PC-3 (cell line): ENCODE measurements at regions of chr12 and their contacts with region 1.

Region 1: DNA sequence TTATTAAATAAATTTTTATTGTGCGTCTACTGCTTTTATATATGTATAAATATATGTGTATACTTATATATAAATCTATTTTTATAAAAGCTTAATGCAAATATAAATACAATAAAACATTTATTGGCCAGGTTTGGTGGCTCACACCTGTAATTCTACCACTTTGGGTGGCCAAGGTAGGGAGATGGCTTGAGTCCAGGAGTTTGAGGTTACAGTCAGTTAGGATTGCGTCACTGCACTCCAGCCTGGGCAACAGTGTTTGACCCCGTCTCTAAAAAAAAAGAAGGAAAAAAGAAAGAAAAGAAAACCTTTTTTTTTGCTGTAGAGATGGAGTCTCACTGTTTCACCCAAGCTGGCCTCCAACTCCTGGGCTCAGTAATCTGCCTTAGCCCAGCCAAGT is 20.9 kb downstream of the ACTR6 start:
- DNase-seq: peak; percentile 57
- ATAC-seq: peak; percentile 11; the same call in 1 of the 2 replicates
- H3K4me3 ChIP-seq: no peak overlapping the region
- H3K27ac ChIP-seq: no peak overlapping the region
- H3K4me1 ChIP-seq: peaks cover 4% of the 10 kb centered on the region; the same call in 1 of the 2 replicates
- H3K27me3 ChIP-seq: no peaks in the 10 kb centered on the region
- CTCF ChIP-seq: no peak

Region 2: GRCh38 chr12:100163416-100164152 is 57.9 kb before region 1 on chr12:
- CTCF ChIA-PET with region 1: interaction called, 5 read pairs
- POLR2A ChIA-PET with region 1: no interaction called
- intact Hi-C with region 1: loop called (anchors 5 kb)
- DNase-seq: peak; percentile 89
- ATAC-seq: peak; percentile 100
- H3K4me3 ChIP-seq: peak overlapping the region; percentile 60
- H3K27ac ChIP-seq: no peak overlapping the region
- H3K4me1 ChIP-seq: peaks cover 11% of the 10 kb centered on the region
- H3K27me3 ChIP-seq: no peaks in the 10 kb centered on the region
- CTCF ChIP-seq: peak; percentile 39; the same call in 1 of the 2 replicates

Region 3: GRCh38 chr12:100545092-100545491 is 323.6 kb after region 1 on chr12:
- CTCF ChIA-PET with region 1: no interaction called
- POLR2A ChIA-PET with region 1: no interaction called
- intact Hi-C with region 1: no loop called
- DNase-seq: peak; percentile 62
- ATAC-seq: peak; percentile 89
- H3K4me3 ChIP-seq: no peak overlapping the region
- H3K27ac ChIP-seq: peak overlapping the region; percentile 42
- H3K4me1 ChIP-seq: peaks cover 8% of the 10 kb centered on the region
- H3K27me3 ChIP-seq: peaks cover 22% of the 10 kb centered on the region
- CTCF ChIP-seq: no peak